Naive thymus-derived CD4-positive, alpha-beta T cell (primary cell): ENCODE measurements at regions of chr6 and their contacts with region 1.

Region 1: DNA sequence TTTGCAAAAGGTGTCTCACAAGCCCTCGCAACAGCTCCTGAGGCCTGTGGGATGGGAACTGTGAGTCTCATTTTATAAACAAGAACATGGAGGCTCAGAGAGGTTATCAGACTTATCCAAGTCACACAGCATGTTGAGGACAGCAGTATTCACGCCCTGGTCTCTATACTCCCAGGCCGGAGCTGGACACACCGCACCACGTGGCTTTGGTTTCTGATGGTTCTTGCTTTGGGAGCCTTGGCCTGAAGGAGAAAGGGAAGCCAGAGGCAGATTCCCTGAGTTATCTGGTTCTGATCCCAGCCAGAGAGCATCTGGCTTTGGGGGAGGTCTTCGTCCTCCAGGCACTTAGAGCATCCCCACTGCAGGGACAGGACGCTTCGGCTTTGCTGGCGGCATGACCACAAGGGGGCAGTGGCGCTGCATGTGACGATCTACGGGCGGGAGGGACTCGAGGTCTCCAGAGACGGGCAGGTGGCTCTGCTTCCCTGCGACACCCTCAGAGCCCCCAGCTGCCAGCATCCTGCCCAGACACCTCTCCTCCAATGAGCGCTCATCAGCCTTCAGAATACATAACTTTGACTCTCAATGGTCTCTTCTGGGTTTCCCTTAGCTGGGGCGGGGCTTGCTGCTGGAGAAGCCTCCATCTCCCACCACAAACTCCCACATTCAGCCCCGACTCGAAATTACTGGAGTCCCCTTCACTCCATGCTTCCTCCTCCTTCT is 51.4 kb upstream of the SAYSD1 start:
- DNase-seq: peak; percentile 26 to 86 (median 66)
- ATAC-seq: peak; percentile 86
- H3K4me3 ChIP-seq: no peak overlapping the region
- H3K4me3 Mint-ChIP-seq: peak overlapping the region in 2 of 10 donors; percentile 34 to 44
- H3K27ac ChIP-seq: no peak overlapping the region
- H3K27ac Mint-ChIP-seq: no peak overlapping the region
- H3K4me1 ChIP-seq: peaks cover 0 to 3% of the 10 kb centered on the region in 2 donors
- H3K4me1 Mint-ChIP-seq: peaks cover 0 to 8% (median 5%) of the 10 kb centered on the region in 7 donors
- H3K27me3 ChIP-seq: no peaks in the 10 kb centered on the region
- H3K27me3 Mint-ChIP-seq: peaks cover 0 to 7% (median 4%) of the 10 kb centered on the region in 5 donors

Region 2: GRCh38 chr6:38973178-38974054 is 192.9 kb before region 1 on chr6:
- CTCF ChIA-PET with region 1: no interaction called
- POLR2A ChIA-PET with region 1: no interaction called
- intact Hi-C with region 1: loop called (anchors 5 to 10 kb)
- DNase-seq: peak in 6 of 9 donors; percentile 22 to 36 (median 32)
- ATAC-seq: peak; percentile 77
- H3K4me3 ChIP-seq: no peak overlapping the region
- H3K4me3 Mint-ChIP-seq: no peak overlapping the region
- H3K27ac ChIP-seq: no peak overlapping the region
- H3K27ac Mint-ChIP-seq: no peak overlapping the region
- H3K4me1 ChIP-seq: no peaks in the 10 kb centered on the region
- H3K4me1 Mint-ChIP-seq: no peaks in the 10 kb centered on the region
- H3K27me3 ChIP-seq: peaks cover 0 to 3% of the 10 kb centered on the region in 2 donors
- H3K27me3 Mint-ChIP-seq: peaks cover 0 to 52% (median 18%) of the 10 kb centered on the region in 5 donors

Region 3: DNA sequence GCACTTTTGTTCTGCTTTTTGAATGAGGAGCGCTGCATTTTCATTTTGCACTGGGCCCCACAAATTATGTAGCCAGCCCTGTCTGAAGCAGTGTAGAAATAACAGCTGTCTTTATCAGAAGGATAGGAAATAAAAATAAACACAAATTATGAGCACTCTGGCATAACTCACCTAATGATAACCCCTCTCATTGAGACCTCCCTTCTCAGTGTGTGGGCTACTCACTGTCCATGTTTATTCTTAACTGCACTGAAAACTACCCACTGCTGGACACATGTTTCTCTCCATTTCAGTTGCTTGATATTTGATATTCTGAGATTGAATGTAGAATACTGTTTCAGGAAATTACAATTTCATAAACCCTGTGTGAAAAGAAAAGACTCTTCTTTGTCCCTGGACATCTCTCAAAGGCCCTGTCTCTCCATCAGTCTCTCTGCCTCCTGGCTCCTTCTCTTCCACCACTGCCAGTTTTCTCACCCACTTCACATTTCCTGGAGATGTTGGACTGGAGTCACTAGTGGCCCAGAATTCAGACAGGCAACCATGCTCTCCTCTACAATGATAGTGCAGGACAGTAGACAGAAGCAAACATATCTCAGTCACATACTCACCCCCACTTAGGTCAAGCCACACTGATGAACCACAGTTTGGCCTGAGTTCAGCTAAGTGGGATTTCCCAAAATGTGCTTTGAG is 21.7 kb before region 1 on chr6:
- CTCF ChIA-PET with region 1: no interaction called
- POLR2A ChIA-PET with region 1: no interaction called
- intact Hi-C with region 1: no loop called
- DNase-seq: no peak
- ATAC-seq: no peak
- H3K4me3 ChIP-seq: no peak overlapping the region
- H3K4me3 Mint-ChIP-seq: no peak overlapping the region
- H3K27ac ChIP-seq: no peak overlapping the region
- H3K27ac Mint-ChIP-seq: peak overlapping the region in 2 of 9 donors; percentile 66 to 96
- H3K4me1 ChIP-seq: no peaks in the 10 kb centered on the region
- H3K4me1 Mint-ChIP-seq: peaks cover 0 to 10% (median 0%) of the 10 kb centered on the region in 7 donors
- H3K27me3 ChIP-seq: no peaks in the 10 kb centered on the region
- H3K27me3 Mint-ChIP-seq: peaks cover 11 to 38% (median 17%) of the 10 kb centered on the region in 5 donors

Region 4: GRCh38 chr6:40611912-40612311 is 1445.6 kb after region 1 on chr6:
- CTCF ChIA-PET with region 1: no interaction called
- POLR2A ChIA-PET with region 1: no interaction called
- intact Hi-C with region 1: no loop called
- DNase-seq: no peak
- ATAC-seq: no peak
- H3K4me3 ChIP-seq: no peak overlapping the region
- H3K4me3 Mint-ChIP-seq: no peak overlapping the region
- H3K27ac ChIP-seq: no peak overlapping the region
- H3K27ac Mint-ChIP-seq: no peak overlapping the region
- H3K4me1 ChIP-seq: no peaks in the 10 kb centered on the region
- H3K4me1 Mint-ChIP-seq: peaks cover 0 to 4% (median 0%) of the 10 kb centered on the region in 7 donors
- H3K27me3 ChIP-seq: no peaks in the 10 kb centered on the region
- H3K27me3 Mint-ChIP-seq: peaks cover 30 to 56% (median 46%) of the 10 kb centered on the region in 5 donors